ENCODE measurements at regions of chr1 and their contacts with region 1.

Region 1: GRCh38 chr1:155193275-155193990 is 14.3 kb downstream of the THBS3 start:
- DNase-seq: peak; percentile 81
- H3K4me3 Mint-ChIP-seq: peak overlapping the region; percentile 76
- H3K27ac Mint-ChIP-seq: peak overlapping the region; percentile 98
- H3K4me1 Mint-ChIP-seq: peaks cover 40% of the 10 kb centered on the region
- H3K27me3 Mint-ChIP-seq: no peaks in the 10 kb centered on the region

Region 2: GRCh38 chr1:155158979-155159378 is 34.5 kb before region 1 on chr1:
- CTCF ChIA-PET with region 1: no interaction called
- POLR2A ChIA-PET with region 1: no interaction called
- DNase-seq: no peak
- H3K4me3 Mint-ChIP-seq: no peak overlapping the region
- H3K27ac Mint-ChIP-seq: no peak overlapping the region
- H3K4me1 Mint-ChIP-seq: no peaks in the 10 kb centered on the region
- H3K27me3 Mint-ChIP-seq: peaks cover 22% of the 10 kb centered on the region

Region 3: DNA sequence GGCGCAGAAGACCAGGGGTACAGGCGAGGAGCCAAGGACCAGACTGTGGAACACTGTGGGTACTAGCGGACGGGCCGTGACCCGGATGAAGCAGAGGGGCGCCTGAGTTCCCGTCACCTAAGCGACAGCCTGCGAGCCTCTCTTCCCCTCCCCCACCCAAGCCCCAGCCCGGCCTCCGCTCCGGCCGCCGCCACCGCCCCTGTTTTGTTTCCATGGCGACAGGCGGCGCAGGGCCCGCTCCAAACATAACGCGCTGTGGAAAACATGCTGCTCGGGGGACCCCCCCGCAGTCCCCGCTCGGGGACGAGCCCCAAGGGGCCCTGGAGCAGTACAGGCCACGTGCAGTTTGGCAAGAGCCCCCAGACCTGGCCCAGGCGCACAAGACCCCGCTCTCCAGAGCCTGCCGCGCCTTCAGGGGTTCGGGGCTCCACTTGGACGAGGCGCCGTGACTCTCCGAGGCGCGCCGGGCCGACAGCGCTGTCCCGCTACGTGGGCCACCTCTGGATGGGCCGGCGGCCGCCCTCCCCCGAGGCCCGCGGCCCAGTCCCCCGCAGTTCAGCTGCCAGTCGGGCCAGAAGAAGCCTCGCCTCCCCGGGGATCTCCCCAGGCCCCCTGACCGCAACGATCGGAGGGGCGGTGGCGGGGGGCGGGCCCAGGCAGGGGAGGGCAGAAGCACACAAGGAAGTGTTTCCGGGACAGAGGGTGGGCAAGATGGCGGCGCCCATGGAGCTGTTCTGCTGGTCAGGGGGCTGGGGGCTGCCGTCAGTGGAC is 15.3 kb after region 1 on chr1 and contains the start of gene MTX1:
- CTCF ChIA-PET with region 1: interaction called, 58 read pairs
- POLR2A ChIA-PET with region 1: interaction called, 87 read pairs
- DNase-seq: peak; percentile 89
- H3K4me3 Mint-ChIP-seq: peak within 1 kb of the TSS; percentile 85
- H3K27ac Mint-ChIP-seq: peak within 1 kb of the TSS; percentile 80
- H3K4me1 Mint-ChIP-seq: peaks cover 40% of the 10 kb centered on the region
- H3K27me3 Mint-ChIP-seq: no peaks in the 10 kb centered on the region
- total RNA-seq, gene MTX1: 41.2 to 43.1 TPM

Region 4: GRCh38 chr1:155227261-155228095 is 34.0 kb after region 1 on chr1:
- CTCF ChIA-PET with region 1: interaction called, 19 read pairs
- POLR2A ChIA-PET with region 1: interaction called, 38 read pairs
- DNase-seq: peak; percentile 100
- H3K4me3 Mint-ChIP-seq: peak overlapping the region; percentile 81
- H3K27ac Mint-ChIP-seq: peak overlapping the region; percentile 89
- H3K4me1 Mint-ChIP-seq: peaks cover 44% of the 10 kb centered on the region
- H3K27me3 Mint-ChIP-seq: no peaks in the 10 kb centered on the region

Region 5: GRCh38 chr1:155277070-155277895 is 83.8 kb after region 1 on chr1 and contains the start of gene HCN3:
- CTCF ChIA-PET with region 1: interaction called, 6 read pairs
- POLR2A ChIA-PET with region 1: interaction called, 12 read pairs
- DNase-seq: peak; percentile 93
- H3K4me3 Mint-ChIP-seq: peak within 1 kb of the TSS; percentile 56
- H3K27ac Mint-ChIP-seq: no peak within 1 kb of the TSS
- H3K4me1 Mint-ChIP-seq: peaks cover 31% of the 10 kb centered on the region
- H3K27me3 Mint-ChIP-seq: peaks cover 4% of the 10 kb centered on the region
- total RNA-seq, gene HCN3: 3.7 to 4.9 TPM

Region 6: DNA sequence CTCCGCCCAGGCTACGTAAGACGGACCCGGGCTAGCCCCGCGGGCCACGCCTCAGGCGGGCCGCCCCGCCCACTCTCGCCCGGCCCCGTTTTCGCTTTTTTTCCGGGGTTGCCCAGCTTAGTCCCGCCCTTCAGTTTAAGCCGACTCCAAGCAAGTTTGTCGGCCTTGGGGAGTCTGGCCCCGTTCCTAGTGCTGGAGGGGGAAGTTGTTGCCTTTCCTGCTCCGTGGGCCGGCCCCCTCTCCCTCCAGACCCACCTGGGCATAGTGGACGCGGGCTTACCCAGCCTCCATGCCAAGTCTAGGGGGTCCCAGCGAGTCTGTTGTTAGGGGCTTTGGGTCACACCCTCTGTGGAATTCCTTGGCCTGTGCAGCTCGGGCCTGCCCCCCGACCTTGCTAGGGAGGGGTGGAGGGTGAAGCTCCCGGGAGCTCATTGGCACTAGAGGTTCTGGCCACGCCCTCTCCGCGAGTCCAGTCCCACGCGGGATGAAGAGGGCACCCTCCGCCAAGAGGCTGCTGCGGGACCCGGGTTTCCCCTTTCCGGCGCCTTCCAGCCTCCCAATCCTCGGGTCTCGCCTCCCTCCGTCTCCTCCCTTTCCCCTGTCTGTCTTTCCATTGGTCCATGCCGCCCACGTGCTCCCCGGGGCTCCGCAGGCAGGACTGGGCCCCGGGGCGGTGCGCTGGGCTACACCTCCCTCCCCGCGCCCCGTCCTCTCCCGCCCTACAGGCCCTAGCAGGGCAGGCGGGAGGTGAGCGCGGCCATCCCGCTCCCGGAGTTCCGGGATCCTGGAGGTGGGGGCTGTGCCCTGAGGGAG is 130.6 kb after region 1 on chr1:
- CTCF ChIA-PET with region 1: interaction called, 10 read pairs
- POLR2A ChIA-PET with region 1: interaction called, 6 read pairs
- DNase-seq: peak; percentile 92
- H3K4me3 Mint-ChIP-seq: peak overlapping the region; percentile 85
- H3K27ac Mint-ChIP-seq: peak overlapping the region; percentile 78
- H3K4me1 Mint-ChIP-seq: peaks cover 46% of the 10 kb centered on the region
- H3K27me3 Mint-ChIP-seq: no peaks in the 10 kb centered on the region